Dendritic cell treated with granulocyte-macrophage colony-stimulating factor and Interleukin-4, amounts not matched to agents 40 ng/mL and 50 ng/mL, for 4 days (primary cell): ENCODE measurements at regions of chr5 and their contacts with region 1.

Region 1: DNA sequence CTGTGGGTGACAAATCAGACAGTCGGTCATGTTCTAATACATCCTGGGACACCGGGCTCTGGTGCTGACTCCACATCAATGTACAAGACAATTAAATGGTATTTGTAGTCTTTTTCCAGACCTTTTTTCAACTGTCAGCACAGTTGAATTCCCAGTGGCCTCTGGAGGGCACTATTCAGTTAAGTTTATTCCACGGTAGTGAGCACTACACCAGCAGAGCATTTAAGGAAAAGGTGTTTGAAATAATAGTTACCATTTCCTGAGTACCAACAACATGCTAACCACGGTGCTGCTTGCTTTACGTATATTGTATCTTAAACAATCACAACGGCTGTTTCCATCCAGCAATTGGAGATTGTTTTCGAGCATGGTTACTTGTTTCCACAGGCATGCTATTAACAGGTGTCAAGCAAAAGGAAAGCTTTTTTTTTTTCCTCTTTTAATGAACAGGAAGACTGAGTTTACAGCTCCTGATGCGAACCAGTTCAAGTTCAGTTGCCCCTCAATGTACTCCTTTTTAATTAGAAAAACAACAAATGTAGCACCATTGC is 186.7 kb downstream of the PDZD2 start:
- H3K4me3 Mint-ChIP-seq: no peak overlapping the region
- H3K27ac Mint-ChIP-seq: no peak overlapping the region
- H3K4me1 Mint-ChIP-seq: no peaks in the 10 kb centered on the region
- H3K27me3 Mint-ChIP-seq: peaks cover 13% of the 10 kb centered on the region

Region 2: GRCh38 chr5:31397926-31398557 is 427.6 kb before region 1 on chr5:
- intact Hi-C with region 1: no loop called
- H3K4me3 Mint-ChIP-seq: no peak overlapping the region
- H3K27ac Mint-ChIP-seq: no peak overlapping the region
- H3K4me1 Mint-ChIP-seq: peaks cover 1% of the 10 kb centered on the region
- H3K27me3 Mint-ChIP-seq: no peaks in the 10 kb centered on the region

Region 3: GRCh38 chr5:31638748-31639418 is 186.7 kb before region 1 on chr5 and contains the start of gene PDZD2:
- intact Hi-C with region 1: no loop called
- H3K4me3 Mint-ChIP-seq: peak within 1 kb of the TSS; percentile 81
- H3K27ac Mint-ChIP-seq: no peak within 1 kb of the TSS
- H3K4me1 Mint-ChIP-seq: peaks cover 6% of the 10 kb centered on the region
- H3K27me3 Mint-ChIP-seq: peaks cover 20% of the 10 kb centered on the region

Region 4: GRCh38 chr5:31770998-31771397 is 54.6 kb before region 1 on chr5:
- intact Hi-C with region 1: no loop called
- H3K4me3 Mint-ChIP-seq: no peak overlapping the region
- H3K27ac Mint-ChIP-seq: no peak overlapping the region
- H3K4me1 Mint-ChIP-seq: peaks cover 12% of the 10 kb centered on the region
- H3K27me3 Mint-ChIP-seq: no peaks in the 10 kb centered on the region

Region 5: GRCh38 chr5:32076699-32077695 is 251.4 kb after region 1 on chr5:
- intact Hi-C with region 1: loop called (anchors 2 kb)
- H3K4me3 Mint-ChIP-seq: no peak overlapping the region
- H3K27ac Mint-ChIP-seq: no peak overlapping the region
- H3K4me1 Mint-ChIP-seq: no peaks in the 10 kb centered on the region
- H3K27me3 Mint-ChIP-seq: no peaks in the 10 kb centered on the region

Region 6: DNA sequence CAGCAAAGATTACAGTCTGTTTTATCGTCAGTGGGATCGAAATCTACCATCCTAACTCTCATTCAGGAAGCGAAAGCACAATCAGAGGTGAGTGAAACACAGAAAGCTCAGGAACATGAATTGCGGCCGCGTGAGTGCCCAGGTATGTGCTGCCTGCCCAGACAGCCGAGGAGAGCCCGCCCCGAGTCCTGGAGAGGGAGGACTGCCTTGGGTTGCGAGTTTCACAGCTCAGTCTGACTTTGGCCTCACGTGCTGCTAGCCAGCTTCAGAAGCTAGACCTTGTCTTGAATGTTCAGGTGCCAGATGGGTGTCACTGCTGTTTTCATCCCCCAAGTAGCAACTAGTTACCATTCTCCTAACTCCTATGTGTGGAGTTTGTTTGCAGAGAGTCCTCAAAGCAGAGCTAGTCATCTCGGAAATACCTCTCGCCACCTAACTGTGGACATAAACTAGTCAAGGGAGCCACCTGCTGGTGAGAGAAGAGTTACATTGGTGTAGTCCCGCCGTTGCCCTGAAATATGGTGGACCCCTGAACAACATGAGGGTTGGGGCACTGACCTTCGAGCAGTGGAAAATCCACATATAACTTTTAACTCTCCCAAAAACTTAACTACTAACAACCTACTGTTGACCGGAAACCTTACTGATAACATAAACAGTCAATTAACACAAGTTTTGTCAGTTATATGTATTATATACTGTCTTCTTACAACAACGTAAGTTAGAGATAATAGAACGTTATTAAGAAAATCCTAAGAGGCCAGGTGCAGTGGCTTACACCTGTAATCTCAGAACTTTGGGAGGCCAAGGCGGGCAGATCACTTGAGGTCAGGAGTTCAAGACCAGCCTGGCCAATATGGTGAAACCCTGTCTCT is 267.6 kb after region 1 on chr5:
- intact Hi-C with region 1: loop called (anchors 1 kb)
- H3K4me3 Mint-ChIP-seq: no peak overlapping the region
- H3K27ac Mint-ChIP-seq: no peak overlapping the region
- H3K4me1 Mint-ChIP-seq: peaks cover 4% of the 10 kb centered on the region
- H3K27me3 Mint-ChIP-seq: no peaks in the 10 kb centered on the region